ENCODE measurements at regions of chr10 and their contacts with region 1.

Region 1: DNA sequence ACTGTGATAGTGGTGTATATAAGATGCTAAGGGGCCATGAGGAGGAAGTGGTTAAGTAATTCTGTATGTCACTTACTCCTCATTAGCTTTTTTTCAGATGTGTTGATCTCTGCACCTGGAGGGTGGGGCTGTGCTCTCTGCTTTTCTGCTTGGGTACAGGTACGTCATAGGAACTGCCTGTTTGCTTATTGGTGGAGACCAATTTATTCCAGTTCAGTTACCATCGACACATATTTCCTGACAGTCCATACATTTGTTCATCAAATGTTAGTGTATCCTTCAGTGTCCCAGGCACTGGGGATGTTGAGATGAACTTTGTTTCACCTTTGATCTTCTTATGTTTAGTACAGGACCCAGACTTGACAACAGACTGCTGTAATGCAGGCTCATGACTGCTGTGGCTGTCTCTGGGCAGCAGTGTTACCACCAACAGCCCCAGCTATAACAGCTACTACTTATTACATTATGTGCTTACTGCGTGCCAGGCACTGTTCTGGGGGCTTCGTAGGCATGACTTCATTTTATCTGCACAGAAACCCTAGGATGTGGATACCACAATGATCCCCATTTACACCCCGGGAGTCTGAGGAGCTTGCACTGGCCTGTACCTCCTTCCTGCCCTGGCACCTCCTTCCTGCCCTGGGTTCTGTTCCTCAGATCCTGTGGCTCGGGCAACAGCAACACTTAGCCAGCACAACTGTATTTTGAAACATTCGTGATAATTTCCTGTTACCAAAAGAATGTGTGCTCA is 87.4 kb downstream of the BUB3 start:
- DNase-seq: peak; percentile 30 to 90 (median 57)
- ATAC-seq: peak; percentile 88
- H3K4me3 ChIP-seq: no peak overlapping the region
- H3K4me3 Mint-ChIP-seq: peak overlapping the region; percentile 67
- H3K27ac ChIP-seq: peak overlapping the region; percentile 75 to 87
- H3K27ac Mint-ChIP-seq: peak overlapping the region; percentile 94
- H3K4me1 ChIP-seq: peaks cover 27% of the 10 kb centered on the region
- H3K4me1 Mint-ChIP-seq: peaks cover 36% of the 10 kb centered on the region
- H3K27me3 ChIP-seq: no peaks in the 10 kb centered on the region
- H3K27me3 Mint-ChIP-seq: no peaks in the 10 kb centered on the region
- CTCF ChIP-seq: no peak

Region 2: GRCh38 chr10:123073187-123073586 is 168.4 kb before region 1 on chr10:
- CTCF ChIA-PET with region 1: no interaction called
- POLR2A ChIA-PET with region 1: no interaction called
- intact Hi-C with region 1: no loop called
- DNase-seq: no peak
- ATAC-seq: no peak
- H3K4me3 ChIP-seq: no peak overlapping the region
- H3K4me3 Mint-ChIP-seq: no peak overlapping the region
- H3K27ac ChIP-seq: no peak overlapping the region
- H3K27ac Mint-ChIP-seq: no peak overlapping the region
- H3K4me1 ChIP-seq: no peaks in the 10 kb centered on the region
- H3K4me1 Mint-ChIP-seq: no peaks in the 10 kb centered on the region
- H3K27me3 ChIP-seq: peaks cover 6 to 9% of the 10 kb centered on the region in 2 experiments
- H3K27me3 Mint-ChIP-seq: peaks cover 40% of the 10 kb centered on the region
- CTCF ChIP-seq: no peak

Region 3: DNA sequence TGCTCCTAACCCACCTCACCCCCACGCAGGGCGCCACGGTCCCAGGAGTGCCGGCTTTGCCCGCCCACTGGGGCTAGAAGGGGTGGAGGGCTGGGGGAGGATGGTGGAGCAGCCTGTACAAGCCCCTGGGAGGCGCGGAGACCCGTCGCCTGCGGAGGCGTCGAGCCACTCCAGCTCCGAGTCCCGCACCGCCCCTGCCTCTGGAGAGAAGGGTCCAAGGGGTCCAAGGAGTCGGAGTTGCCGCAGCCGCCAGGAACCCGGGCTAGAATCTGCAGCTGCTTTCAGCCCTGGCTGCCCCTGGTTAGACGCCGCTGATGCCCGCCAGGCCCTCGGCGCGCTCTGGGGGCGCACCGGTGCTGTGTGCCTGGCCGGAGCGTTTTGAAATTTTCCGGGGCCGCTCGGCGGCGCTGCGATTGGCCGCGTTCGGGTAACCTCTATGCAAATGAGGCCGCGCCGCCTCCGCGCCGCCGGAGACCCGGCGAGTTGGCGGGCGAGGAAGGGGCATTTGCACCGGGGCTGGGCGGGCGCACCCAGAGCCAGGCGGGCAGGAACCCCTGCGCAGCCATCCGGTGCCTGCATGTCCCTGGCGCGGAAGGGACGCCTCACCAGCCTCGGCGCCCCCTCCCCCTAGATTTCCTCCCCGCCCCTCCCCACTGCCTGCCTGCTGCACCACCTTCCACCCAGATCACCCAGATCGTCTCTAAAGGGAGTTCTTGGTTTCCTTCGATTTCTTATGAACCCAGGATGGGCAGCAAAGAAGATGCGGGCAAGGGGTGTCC is 93.7 kb before region 1 on chr10 and contains the start of gene HMX2:
- CTCF ChIA-PET with region 1: no interaction called
- POLR2A ChIA-PET with region 1: interaction called, 80 read pairs
- intact Hi-C with region 1: no loop called
- DNase-seq: peak in 6 of 14 experiments; percentile 28 to 59 (median 45)
- ATAC-seq: peak; percentile 28
- H3K4me3 ChIP-seq: peak within 1 kb of the TSS; percentile 25
- H3K4me3 Mint-ChIP-seq: peak within 1 kb of the TSS; percentile 80
- H3K27ac ChIP-seq: no peak within 1 kb of the TSS
- H3K27ac Mint-ChIP-seq: no peak within 1 kb of the TSS
- H3K4me1 ChIP-seq: peaks cover 88% of the 10 kb centered on the region
- H3K4me1 Mint-ChIP-seq: peaks cover 71% of the 10 kb centered on the region
- H3K27me3 ChIP-seq: peaks cover 84 to 86% of the 10 kb centered on the region in 2 experiments
- H3K27me3 Mint-ChIP-seq: peaks cover 74% of the 10 kb centered on the region
- CTCF ChIP-seq: no peak
- total RNA-seq, gene HMX2: not detected

Region 4: GRCh38 chr10:123160311-123160980 is 81.1 kb before region 1 on chr10:
- CTCF ChIA-PET with region 1: interaction called, 4 read pairs
- POLR2A ChIA-PET with region 1: interaction called, 80 read pairs
- intact Hi-C with region 1: loop called in 1 of 2 experiments (anchors 5 kb)
- DNase-seq: peak in 4 of 14 experiments; percentile 27 to 90 (median 68)
- ATAC-seq: peak; percentile 98
- H3K4me3 ChIP-seq: peak overlapping the region; percentile 7
- H3K4me3 Mint-ChIP-seq: peak overlapping the region; percentile 66
- H3K27ac ChIP-seq: peak overlapping the region; percentile 47 to 54
- H3K27ac Mint-ChIP-seq: peak overlapping the region; percentile 97
- H3K4me1 ChIP-seq: peaks cover 21% of the 10 kb centered on the region
- H3K4me1 Mint-ChIP-seq: peaks cover 72% of the 10 kb centered on the region
- H3K27me3 ChIP-seq: no peaks in the 10 kb centered on the region
- H3K27me3 Mint-ChIP-seq: no peaks in the 10 kb centered on the region
- CTCF ChIP-seq: no peak

Measured in CD4-positive, alpha-beta T cell (primary cell).